A549 (cell line): ENCODE measurements at regions of chr10 and their contacts with region 1.

Region 1: DNA sequence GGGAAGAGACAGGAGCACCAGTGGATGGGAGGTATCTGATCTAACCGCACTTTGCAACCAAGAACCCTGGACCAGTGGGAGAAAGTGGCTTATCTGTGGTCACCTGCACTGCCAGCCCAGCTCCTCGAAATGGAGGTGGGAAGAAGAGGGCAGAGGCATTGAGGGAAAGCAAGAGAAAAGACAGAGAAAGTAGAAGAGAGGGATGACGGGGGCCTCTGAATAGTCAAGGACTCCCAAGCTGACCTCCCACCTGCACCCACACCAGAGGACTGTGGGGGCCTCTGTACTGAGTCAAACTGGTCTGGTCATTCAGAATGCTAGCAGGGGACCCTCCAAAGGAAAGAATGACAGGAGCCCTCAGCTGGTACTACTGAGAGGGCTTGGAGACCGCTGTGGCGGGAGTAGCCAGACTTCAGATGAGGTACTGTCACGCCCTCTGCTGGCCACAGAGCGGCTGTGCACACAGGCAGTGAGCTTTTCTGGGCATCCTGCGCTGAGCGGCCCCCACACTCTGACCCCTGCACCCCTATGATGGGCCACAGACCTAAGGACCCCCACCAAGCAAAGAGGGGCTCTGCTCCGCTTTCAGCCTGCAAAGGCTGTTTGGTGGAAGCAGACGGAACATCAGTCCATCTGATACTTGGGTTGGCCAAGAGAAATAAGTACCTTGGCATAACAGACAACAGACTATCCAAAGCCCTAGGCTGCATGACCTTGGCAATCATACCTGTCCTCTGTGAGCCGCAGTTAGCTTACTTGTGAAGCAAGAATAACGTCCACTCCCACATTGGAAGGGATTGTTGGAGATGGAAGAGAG is 112.9 kb downstream of the COL13A1 start:
- DNase-seq: peak; percentile 65 to 74
- ATAC-seq: peak; percentile 87 to 97
- H3K4me3 ChIP-seq: no peak overlapping the region
- H3K27ac ChIP-seq: no peak overlapping the region
- H3K4me1 ChIP-seq: no peaks in the 10 kb centered on the region
- CTCF ChIP-seq: peak; percentile 92
- EP300 ChIP-seq: no peak
- POLR2A ChIP-seq: no peak
- RAD21 ChIP-seq: peak; percentile 91 to 92

Region 2: DNA sequence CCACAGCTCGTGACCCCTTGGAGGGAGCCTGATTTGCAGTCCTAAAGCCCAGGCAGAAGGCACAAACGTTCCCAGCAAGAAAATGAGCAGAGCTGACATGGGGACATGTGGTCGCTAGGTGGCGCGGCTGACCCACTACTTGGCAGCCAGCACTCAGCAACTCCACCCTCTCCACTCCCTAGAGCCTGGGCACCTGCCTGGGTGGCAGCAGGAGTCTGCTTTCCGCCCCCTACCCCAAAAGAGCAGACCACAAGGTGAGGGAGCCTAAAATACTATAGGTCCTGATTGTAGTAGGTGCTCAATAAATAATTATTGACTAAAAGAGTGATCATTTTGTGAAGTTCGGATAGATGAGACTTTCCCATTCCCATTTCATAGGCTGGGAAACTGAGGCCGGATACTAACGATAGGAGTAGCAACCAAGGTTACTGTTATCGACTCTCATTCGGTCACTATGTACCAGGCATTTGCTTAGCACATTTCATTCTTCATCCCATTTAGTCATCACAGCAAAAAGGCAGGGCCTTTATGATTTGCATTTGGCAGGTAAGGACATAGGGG is 398.8 kb before region 1 on chr10:
- CTCF ChIA-PET with region 1: interaction called, 18 read pairs
- POLR2A ChIA-PET with region 1: no interaction called
- DNase-seq: peak; percentile 78 to 87
- ATAC-seq: peak; percentile 96 to 97
- H3K4me3 ChIP-seq: no peak overlapping the region
- H3K27ac ChIP-seq: no peak overlapping the region
- H3K4me1 ChIP-seq: no peaks in the 10 kb centered on the region
- CTCF ChIP-seq: peak; percentile 82
- EP300 ChIP-seq: no peak
- POLR2A ChIP-seq: no peak
- RAD21 ChIP-seq: peak; percentile 88 to 90

Region 3: DNA sequence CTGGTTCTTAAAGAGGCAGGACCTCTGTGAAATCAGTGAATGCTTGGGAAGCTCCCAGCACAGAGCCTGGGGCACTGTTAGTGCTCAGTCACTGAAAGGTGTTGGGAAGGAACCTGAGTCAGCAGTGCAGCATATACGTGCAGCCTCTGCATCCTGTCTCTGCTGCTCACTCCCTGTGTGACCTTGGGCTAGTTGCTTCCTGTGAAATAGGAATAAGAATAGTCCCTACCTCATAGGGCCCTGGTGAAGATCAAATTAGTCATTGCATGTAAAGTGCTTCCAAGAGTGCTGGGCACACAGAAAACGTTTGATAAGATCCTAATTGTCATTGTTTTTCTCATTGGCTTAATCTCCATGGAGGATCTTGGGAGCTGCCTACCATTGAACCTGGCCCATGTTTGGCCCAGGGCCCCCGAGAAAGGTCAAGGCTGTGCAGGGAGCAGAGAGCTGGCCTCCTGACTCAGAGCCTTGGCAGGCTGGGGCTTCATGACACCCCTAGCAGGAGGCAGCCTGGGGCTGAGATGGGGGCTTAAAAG is 186.2 kb before region 1 on chr10:
- CTCF ChIA-PET with region 1: interaction called, 10 read pairs
- POLR2A ChIA-PET with region 1: no interaction called
- DNase-seq: peak in 1 of 2 experiments; percentile 49
- ATAC-seq: peak; percentile 36 to 49; a peak in 3 of 6 replicates
- H3K4me3 ChIP-seq: no peak overlapping the region
- H3K27ac ChIP-seq: no peak overlapping the region
- H3K4me1 ChIP-seq: peaks cover 17% of the 10 kb centered on the region; the same call in 2 of the 3 replicates
- CTCF ChIP-seq: no peak
- EP300 ChIP-seq: no peak
- POLR2A ChIP-seq: no peak
- RAD21 ChIP-seq: no peak

Region 4: DNA sequence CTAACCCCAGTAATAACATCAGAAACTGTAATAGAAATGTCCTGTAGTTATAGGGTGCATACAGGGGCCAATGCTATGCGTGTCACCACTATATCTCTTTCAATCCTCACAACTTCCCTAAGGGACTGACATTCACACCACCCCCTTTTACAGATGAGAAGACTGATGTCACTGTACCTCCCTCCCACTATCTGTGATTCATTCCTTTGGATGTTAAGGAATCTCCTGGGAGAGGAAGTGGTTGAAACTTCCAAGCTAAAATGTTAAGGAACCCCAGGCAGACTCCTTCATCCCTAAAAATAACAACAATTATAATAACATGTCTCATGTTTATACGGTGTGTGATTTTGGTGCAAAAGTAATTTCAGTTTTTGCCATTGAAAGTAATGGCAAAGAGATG is 107.5 kb before region 1 on chr10:
- CTCF ChIA-PET with region 1: interaction called, 41 read pairs
- POLR2A ChIA-PET with region 1: no interaction called
- DNase-seq: peak; percentile 40 to 50
- ATAC-seq: peak; percentile 14 to 32; a peak in 3 of 6 replicates
- H3K4me3 ChIP-seq: no peak overlapping the region
- H3K27ac ChIP-seq: peak overlapping the region in 1 of 2 experiments; percentile 59; a peak in 1 of 6 replicates
- H3K4me1 ChIP-seq: peaks cover 13% of the 10 kb centered on the region
- CTCF ChIP-seq: no peak
- EP300 ChIP-seq: no peak
- POLR2A ChIP-seq: no peak
- RAD21 ChIP-seq: no peak

Region 5: GRCh38 chr10:69861251-69862240 is 53.1 kb before region 1 on chr10:
- CTCF ChIA-PET with region 1: interaction called, 103 read pairs
- POLR2A ChIA-PET with region 1: no interaction called
- DNase-seq: peak; percentile 40 to 59
- ATAC-seq: peak; percentile 59 to 74; a peak in 5 of 6 replicates
- H3K4me3 ChIP-seq: no peak overlapping the region
- H3K27ac ChIP-seq: peak overlapping the region in 1 of 2 experiments; percentile 87; a peak in 4 of 6 replicates
- H3K4me1 ChIP-seq: peaks cover 39% of the 10 kb centered on the region
- CTCF ChIP-seq: peak; percentile 43
- EP300 ChIP-seq: no peak
- POLR2A ChIP-seq: no peak
- RAD21 ChIP-seq: peak; percentile 30 to 42; a peak in 3 of 5 replicates

Region 6: DNA sequence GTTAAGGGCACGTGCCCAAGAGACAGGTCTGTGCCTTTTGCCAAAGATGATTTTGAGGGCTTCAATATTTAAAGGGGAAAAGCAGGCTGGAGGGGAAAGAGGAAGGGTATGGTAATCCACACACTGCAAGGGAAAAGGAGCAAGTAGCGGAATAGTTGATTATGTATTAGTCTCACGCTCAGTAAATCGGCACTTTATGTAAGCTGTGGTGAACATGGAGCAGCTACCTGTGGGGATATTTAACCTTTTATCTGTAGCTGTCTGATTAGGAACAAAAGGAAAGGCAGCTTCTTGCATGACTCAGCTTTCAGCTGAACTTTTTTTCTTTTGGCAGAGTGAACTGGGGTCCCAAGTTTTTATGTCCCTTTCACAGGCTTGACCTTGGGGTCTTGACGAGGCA is 10.5 kb after region 1 on chr10:
- CTCF ChIA-PET with region 1: interaction called, 74 read pairs
- POLR2A ChIA-PET with region 1: no interaction called
- DNase-seq: no peak
- ATAC-seq: no peak
- H3K4me3 ChIP-seq: no peak overlapping the region
- H3K27ac ChIP-seq: no peak overlapping the region
- H3K4me1 ChIP-seq: no peaks in the 10 kb centered on the region
- CTCF ChIP-seq: no peak
- EP300 ChIP-seq: no peak
- POLR2A ChIP-seq: no peak
- RAD21 ChIP-seq: no peak

Region 7: GRCh38 chr10:70034232-70034631 is 119.6 kb after region 1 on chr10:
- CTCF ChIA-PET with region 1: no interaction called
- POLR2A ChIA-PET with region 1: no interaction called
- DNase-seq: no peak
- ATAC-seq: no peak
- H3K4me3 ChIP-seq: no peak overlapping the region
- H3K27ac ChIP-seq: no peak overlapping the region
- H3K4me1 ChIP-seq: no peaks in the 10 kb centered on the region
- CTCF ChIP-seq: no peak
- EP300 ChIP-seq: no peak
- POLR2A ChIP-seq: no peak
- RAD21 ChIP-seq: no peak